Activated CD8-positive, alpha-beta memory T cell treated with anti-CD3 and anti-CD28 coated beads, Interleukin-2, amount 10 ng/mL, durations not matched to agents 7 days and 5 days (primary cell): ENCODE measurements at regions of chr19 and their contacts with region 1.

Region 1: GRCh38 chr19:47130591-47131227 is at the start of gene SAE1:
- DNase-seq: peak; percentile 95
- ATAC-seq: peak; percentile 90
- H3K4me3 Mint-ChIP-seq: peak within 1 kb of the TSS; percentile 96
- H3K27ac Mint-ChIP-seq: peak within 1 kb of the TSS; percentile 98
- H3K4me1 Mint-ChIP-seq: peaks cover 46% of the 10 kb centered on the region
- H3K27me3 Mint-ChIP-seq: no peaks in the 10 kb centered on the region
- total RNA-seq, gene SAE1: 153 to 171 TPM

Region 2: DNA sequence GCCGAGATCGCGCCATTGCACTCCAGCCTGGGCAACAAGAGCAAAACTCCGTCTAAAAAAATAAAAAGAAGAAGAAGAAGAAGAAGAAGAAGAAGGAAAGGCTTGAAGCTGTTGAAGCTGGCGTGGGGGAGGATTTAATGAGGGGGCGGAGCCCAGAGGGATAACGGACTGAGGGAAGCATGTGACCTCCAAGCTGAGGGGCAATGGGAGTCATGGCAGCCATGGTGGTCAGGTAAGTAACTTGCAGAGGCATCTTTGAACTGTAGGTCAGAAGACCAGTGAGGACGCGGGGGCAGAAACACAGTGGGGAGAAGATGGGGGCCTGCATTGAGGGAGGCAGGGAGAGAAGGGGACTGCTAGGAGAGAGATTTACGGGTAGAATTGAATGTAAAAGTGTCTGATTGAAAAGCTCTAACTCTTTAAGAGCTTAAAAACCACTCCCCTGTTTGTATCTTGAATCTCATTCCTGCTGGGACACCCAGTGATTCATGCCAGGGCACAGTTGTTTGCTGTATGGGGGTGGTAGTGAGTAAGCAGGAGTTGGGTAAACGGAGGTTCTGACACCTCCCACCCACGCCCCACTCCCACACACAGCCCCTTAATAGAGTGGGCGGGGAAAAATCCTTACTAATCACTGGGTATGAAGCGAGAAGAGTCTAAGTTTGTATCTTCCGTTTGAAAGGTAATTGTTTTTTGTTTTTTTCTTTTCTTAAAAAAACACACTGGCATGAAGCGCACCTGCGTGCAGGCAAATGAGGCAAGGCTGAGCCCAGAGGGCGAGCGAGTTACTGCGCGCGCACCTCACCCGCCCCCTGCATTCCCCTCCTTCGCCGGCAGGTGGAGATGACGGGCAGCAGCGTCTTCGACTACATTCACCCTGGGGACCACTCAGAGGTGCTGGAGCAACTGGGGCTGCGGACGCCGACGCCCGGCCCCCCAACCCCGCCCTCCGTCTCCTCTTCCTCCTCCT is 95.3 kb before region 1 on chr19:
- CTCF ChIA-PET with region 1: interaction called, 22 read pairs
- DNase-seq: peak; percentile 96
- ATAC-seq: peak; percentile 93
- H3K4me3 Mint-ChIP-seq: peak overlapping the region; percentile 88
- H3K27ac Mint-ChIP-seq: peak overlapping the region; percentile 79
- H3K4me1 Mint-ChIP-seq: peaks cover 17% of the 10 kb centered on the region
- H3K27me3 Mint-ChIP-seq: peaks cover 27% of the 10 kb centered on the region

Region 3: GRCh38 chr19:47081111-47081510 is 49.6 kb before region 1 on chr19:
- CTCF ChIA-PET with region 1: interaction called, 56 read pairs
- DNase-seq: no peak
- ATAC-seq: no peak
- H3K4me3 Mint-ChIP-seq: no peak overlapping the region
- H3K27ac Mint-ChIP-seq: peak overlapping the region; percentile 36
- H3K4me1 Mint-ChIP-seq: no peaks in the 10 kb centered on the region
- H3K27me3 Mint-ChIP-seq: no peaks in the 10 kb centered on the region

Region 4: DNA sequence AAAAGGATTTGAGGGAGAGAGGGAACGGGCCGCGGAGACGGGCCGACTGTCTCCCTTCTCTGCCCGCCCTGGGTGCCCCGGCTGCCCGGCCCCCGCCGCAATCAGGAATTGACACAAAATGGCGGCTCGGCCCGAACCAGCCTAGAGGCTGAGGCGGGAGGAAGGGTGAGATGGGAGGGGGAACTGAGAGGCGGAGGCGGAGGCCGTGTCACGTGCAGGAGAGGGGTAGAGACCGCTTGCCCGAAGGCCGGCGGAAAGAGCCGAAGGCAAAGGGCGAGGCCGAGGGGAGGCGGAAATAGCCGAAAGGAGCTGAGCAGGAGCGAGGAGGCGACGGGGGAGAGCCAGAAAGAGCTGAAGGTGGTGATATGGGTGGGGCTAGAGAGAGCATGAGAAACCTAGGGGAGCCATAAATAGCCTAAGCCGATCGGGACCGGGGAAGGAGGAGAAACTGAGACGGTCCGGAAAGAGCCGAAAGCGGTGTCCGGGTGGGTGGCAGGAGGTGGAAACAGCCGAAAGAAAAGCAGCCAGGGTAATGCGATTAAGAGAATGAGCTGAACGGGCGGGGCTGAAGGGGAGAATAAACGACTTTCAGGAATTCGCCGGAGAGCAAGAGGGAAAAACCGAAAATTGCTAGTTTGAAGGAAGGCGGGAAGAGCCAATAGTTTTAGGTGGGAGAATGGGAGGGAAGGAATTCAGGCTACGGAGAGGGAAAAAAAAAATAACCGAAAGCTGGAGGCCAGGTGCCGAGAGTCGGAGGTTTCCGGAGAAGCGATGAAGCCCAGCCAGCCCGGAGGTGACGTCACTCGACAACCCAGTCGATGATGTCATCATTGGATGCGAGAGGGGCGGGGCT is 17.5 kb before region 1 on chr19 and contains the start of gene ZC3H4:
- CTCF ChIA-PET with region 1: interaction called, 13 read pairs
- DNase-seq: peak; percentile 100
- ATAC-seq: peak; percentile 86
- H3K4me3 Mint-ChIP-seq: peak within 1 kb of the TSS; percentile 95
- H3K27ac Mint-ChIP-seq: peak within 1 kb of the TSS; percentile 100
- H3K4me1 Mint-ChIP-seq: peaks cover 24% of the 10 kb centered on the region
- H3K27me3 Mint-ChIP-seq: no peaks in the 10 kb centered on the region
- total RNA-seq, gene ZC3H4: 98.9 to 114 TPM

Region 5: DNA sequence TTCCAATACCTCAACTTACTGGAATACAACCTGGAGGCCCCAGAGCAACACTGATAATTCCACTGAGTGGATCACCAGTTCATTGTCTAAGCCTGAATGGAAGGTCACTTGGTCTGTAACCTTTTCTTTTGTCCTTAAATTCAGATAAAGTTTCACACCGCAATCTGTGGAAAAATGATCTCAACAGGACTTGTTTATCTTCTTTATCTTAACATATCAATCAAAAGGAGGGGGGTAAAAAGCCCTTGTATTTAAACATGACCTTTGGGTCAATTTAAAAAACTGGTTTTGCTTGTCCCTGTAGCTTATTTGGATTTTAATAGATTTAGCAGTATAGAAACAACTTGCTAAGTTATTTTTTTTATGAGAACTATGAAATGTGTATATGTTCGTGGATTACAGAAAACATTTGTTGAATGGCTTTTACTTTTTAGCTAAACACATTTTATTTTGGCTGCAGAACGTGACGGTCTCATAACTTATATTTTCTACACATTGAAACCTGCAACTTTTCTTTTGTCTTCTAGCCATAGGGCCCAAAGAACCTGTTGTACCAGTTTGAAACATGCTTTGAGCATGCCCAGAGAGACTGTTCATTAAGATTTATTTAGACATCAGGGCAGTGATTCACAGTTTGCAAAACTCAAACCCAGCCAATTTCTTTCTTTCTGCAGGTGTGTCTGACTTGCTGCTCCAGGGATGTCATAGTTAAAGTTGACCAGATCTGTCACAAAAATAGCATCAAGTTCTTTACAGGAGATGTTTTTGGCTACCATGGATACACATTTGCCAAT is 21.7 kb after region 1 on chr19:
- CTCF ChIA-PET with region 1: interaction called, 13 read pairs
- DNase-seq: no peak
- ATAC-seq: no peak
- H3K4me3 Mint-ChIP-seq: no peak overlapping the region
- H3K27ac Mint-ChIP-seq: peak overlapping the region; percentile 42
- H3K4me1 Mint-ChIP-seq: peaks cover 27% of the 10 kb centered on the region
- H3K27me3 Mint-ChIP-seq: no peaks in the 10 kb centered on the region

Region 6: GRCh38 chr19:47157431-47158321 is 27.0 kb after region 1 on chr19:
- CTCF ChIA-PET with region 1: interaction called, 13 read pairs
- DNase-seq: peak; percentile 51
- ATAC-seq: peak; percentile 46
- H3K4me3 Mint-ChIP-seq: peak overlapping the region; percentile 10
- H3K27ac Mint-ChIP-seq: peak overlapping the region; percentile 73
- H3K4me1 Mint-ChIP-seq: peaks cover 44% of the 10 kb centered on the region
- H3K27me3 Mint-ChIP-seq: no peaks in the 10 kb centered on the region